Activated CD4-positive, alpha-beta memory T cell treated with anti-CD3 and anti-CD28 coated beads, Interleukin-2, amount 10 ng/mL, durations not matched to agents 7 days and 5 days (primary cell): ENCODE measurements at regions of chr1 and their contacts with region 1.

Region 1: GRCh38 chr1:15526490-15527339 is at the start of gene DNAJC16:
- DNase-seq: peak; percentile 99
- H3K4me3 Mint-ChIP-seq: peak within 1 kb of the TSS; percentile 88
- H3K27ac Mint-ChIP-seq: peak within 1 kb of the TSS; percentile 95
- H3K4me1 Mint-ChIP-seq: peaks cover 59% of the 10 kb centered on the region
- H3K27me3 Mint-ChIP-seq: no peaks in the 10 kb centered on the region
- total RNA-seq, gene DNAJC16: 17.3 to 18.1 TPM

Region 2: DNA sequence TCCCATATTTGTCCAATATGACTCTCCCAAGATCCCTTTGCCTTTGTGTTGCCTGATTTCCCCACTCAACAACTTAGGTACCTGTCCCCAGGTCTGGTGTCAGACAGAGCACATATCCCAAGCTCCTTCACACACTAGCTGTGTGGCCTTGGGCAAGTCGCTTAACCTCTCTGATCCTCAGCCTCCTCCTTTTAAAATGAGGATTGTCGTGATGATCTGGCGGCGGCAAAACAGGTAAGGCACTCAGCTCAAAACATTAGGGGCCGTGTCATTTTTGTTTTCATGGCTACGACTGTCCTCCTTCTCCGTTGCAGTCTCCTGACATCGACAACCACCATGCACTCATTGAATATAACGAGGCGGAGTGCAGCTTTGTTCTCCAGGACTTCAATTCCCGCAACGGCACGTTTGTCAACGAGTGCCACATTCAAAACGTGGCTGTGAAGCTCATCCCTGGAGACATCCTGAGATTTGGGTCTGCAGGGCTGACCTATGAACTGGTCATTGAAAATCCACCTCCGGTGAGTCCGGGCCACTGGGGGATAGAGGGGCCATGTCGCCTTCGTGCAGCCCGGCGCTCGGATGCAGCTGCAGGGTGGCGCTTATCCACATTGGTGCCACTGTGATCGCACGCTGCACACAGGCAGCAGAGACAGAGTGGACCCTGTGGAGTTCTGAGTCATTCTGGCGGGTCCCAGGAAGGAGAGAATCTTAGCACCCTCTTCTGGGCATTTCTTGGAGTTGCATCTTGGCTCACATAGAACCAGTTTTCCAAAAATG is 254.5 kb before region 1 on chr1:
- CTCF ChIA-PET with region 1: no interaction called
- POLR2A ChIA-PET with region 1: no interaction called
- DNase-seq: peak; percentile 44
- H3K4me3 Mint-ChIP-seq: no peak overlapping the region
- H3K27ac Mint-ChIP-seq: no peak overlapping the region
- H3K4me1 Mint-ChIP-seq: peaks cover 3% of the 10 kb centered on the region
- H3K27me3 Mint-ChIP-seq: peaks cover 34% of the 10 kb centered on the region

Region 3: GRCh38 chr1:15444468-15445389 is 82.0 kb before region 1 on chr1:
- CTCF ChIA-PET with region 1: no interaction called
- POLR2A ChIA-PET with region 1: no interaction called
- DNase-seq: no peak
- H3K4me3 Mint-ChIP-seq: no peak overlapping the region
- H3K27ac Mint-ChIP-seq: no peak overlapping the region
- H3K4me1 Mint-ChIP-seq: peaks cover 10% of the 10 kb centered on the region
- H3K27me3 Mint-ChIP-seq: peaks cover 3% of the 10 kb centered on the region

Region 4: GRCh38 chr1:15515022-15515663 is 11.6 kb before region 1 on chr1:
- CTCF ChIA-PET with region 1: interaction called, 3 read pairs
- POLR2A ChIA-PET with region 1: interaction called, 11 read pairs
- DNase-seq: no peak
- H3K4me3 Mint-ChIP-seq: no peak overlapping the region
- H3K27ac Mint-ChIP-seq: peak overlapping the region; percentile 80
- H3K4me1 Mint-ChIP-seq: peaks cover 61% of the 10 kb centered on the region
- H3K27me3 Mint-ChIP-seq: no peaks in the 10 kb centered on the region

Region 5: GRCh38 chr1:15578921-15579682 is 52.4 kb after region 1 on chr1:
- CTCF ChIA-PET with region 1: no interaction called
- POLR2A ChIA-PET with region 1: interaction called, 10 read pairs
- DNase-seq: peak; percentile 63
- H3K4me3 Mint-ChIP-seq: peak overlapping the region; percentile 3
- H3K27ac Mint-ChIP-seq: peak overlapping the region; percentile 98
- H3K4me1 Mint-ChIP-seq: peaks cover 42% of the 10 kb centered on the region
- H3K27me3 Mint-ChIP-seq: no peaks in the 10 kb centered on the region

Region 6: DNA sequence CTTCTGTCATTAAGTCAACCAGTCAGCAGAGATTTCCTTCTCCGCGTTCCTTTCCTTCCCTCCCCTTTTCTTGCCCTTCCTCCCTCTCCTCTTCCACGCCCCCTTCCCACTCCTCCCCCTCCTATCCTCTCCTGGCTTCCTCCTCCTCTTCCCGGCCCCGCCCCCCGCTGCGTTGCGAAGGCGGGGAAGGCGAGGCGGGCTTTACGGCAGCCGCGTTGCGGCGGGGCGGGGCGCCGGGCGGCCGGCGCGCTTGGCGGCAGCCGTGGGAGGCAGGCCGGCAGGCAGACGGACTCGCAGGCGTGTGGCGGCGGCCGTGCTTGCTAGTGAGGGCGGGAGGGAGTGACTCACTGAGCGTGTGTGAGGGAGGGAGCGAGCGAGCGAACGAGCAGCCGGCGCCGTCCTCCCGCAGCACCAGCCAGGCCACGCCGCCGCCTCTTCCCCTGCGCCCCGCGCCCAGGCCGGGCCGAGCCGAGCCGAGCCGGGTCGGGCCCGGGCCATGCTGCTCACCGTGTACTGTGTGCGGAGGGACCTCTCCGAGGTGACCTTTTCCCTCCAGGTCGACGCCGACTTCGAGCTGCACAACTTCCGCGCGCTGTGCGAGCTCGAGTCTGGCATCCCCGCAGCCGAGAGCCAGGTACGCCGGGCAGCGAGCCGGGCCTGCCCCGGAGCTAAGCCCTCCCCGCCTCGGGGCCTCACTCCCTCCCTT is 90.6 kb after region 1 on chr1 and contains the start of gene DDI2:
- CTCF ChIA-PET with region 1: no interaction called
- POLR2A ChIA-PET with region 1: interaction called, 18 read pairs
- DNase-seq: peak; percentile 95
- H3K4me3 Mint-ChIP-seq: peak within 1 kb of the TSS; percentile 94
- H3K27ac Mint-ChIP-seq: peak within 1 kb of the TSS; percentile 94
- H3K4me1 Mint-ChIP-seq: peaks cover 44% of the 10 kb centered on the region
- H3K27me3 Mint-ChIP-seq: no peaks in the 10 kb centered on the region
- total RNA-seq, gene DDI2: 30.5 to 32.7 TPM